ENCODE measurements at regions of chr9 and their contacts with region 1.

Region 1: DNA sequence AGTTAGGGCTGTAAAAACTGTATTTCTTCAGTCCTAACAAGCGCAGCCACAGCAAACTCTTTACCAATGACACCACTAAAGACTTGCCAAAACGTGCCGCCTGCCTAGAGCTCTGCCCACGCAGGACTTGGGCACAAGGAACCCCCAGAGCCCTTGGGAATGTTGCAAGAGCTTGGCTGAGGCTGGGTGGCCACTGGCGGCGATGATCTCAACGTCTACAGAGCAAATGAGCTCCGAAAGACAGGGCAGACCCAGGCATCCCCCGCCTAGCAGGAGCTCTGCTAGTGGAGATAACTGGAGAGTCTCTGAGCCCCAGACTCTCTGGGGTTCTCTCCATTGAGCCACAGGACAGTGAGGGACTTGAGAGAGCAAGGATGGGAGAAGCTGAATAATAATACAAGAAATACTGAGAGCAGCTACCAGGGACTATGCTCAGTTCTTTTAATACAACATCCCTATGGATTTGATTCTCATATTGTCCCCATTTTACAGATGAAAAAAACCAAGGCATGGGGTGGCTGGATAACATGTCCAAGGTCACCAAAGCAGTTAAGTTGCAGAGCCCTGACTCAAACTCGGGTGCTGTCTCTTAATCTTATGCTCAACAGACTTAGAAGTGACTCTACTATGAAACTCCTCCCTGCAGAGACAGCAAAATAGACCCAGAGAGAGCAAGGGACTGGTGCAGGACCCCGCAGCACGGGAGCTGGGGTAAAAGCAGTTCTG is 32.5 kb downstream of the SHB start:
- DNase-seq: peak; percentile 76
- H3K4me3 ChIP-seq: no peak overlapping the region
- H3K27ac ChIP-seq: peak overlapping the region; percentile 49
- H3K4me1 ChIP-seq: peaks cover 55% of the 10 kb centered on the region
- H3K27me3 ChIP-seq: no peaks in the 10 kb centered on the region
- CTCF ChIP-seq: no peak

Region 2: DNA sequence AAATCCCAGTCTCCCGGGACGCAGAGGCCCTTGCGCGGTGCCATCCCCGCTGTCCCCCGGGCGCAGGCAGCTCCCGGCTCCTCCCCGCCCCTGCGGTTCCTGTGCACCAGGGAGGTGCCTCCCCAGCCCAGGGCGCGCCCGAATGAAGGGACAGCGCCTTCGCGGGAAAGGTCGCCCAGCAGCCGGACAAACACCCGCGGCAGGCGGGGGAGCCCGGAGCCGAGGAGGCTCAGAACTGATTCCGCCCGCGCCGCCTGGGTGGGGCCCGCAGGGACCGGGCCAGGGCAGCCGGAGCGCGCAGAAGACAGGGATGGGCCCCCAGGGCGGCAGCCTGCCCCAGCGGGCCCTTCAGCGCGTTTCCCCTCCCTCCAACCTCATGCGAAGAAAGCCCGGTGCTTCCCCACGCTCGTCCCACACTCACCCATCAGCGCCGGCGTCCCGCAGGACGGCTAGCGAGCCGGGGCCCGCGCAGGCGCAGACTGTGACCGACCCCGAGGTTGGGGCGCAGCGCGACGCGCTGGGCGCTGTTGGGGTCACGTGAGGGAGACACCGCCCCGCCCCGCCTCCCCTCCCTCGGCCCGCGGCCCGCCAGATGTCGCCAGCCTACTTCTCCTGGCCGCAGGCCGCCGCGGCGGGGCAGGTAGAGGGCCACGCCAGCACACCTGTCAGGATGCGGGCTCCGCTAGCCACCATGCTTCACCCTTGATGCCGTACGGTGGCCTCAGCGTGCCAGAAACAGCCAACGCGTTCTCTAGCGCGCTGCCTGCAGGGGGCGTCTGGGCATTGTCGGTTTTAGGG is 132.7 kb before region 1 on chr9 and contains the start of gene SLC25A51:
- CTCF ChIA-PET with region 1: no interaction called
- POLR2A ChIA-PET with region 1: no interaction called
- intact Hi-C with region 1: no loop called
- DNase-seq: peak; percentile 94
- H3K4me3 ChIP-seq: peak within 1 kb of the TSS; percentile 70
- H3K27ac ChIP-seq: peak within 1 kb of the TSS; percentile 63
- H3K4me1 ChIP-seq: peaks cover 6% of the 10 kb centered on the region
- H3K27me3 ChIP-seq: no peaks in the 10 kb centered on the region
- CTCF ChIP-seq: peak; percentile 98
- total RNA-seq, gene SLC25A51: 36.3 and 40.8 TPM in 2 replicates

Region 3: DNA sequence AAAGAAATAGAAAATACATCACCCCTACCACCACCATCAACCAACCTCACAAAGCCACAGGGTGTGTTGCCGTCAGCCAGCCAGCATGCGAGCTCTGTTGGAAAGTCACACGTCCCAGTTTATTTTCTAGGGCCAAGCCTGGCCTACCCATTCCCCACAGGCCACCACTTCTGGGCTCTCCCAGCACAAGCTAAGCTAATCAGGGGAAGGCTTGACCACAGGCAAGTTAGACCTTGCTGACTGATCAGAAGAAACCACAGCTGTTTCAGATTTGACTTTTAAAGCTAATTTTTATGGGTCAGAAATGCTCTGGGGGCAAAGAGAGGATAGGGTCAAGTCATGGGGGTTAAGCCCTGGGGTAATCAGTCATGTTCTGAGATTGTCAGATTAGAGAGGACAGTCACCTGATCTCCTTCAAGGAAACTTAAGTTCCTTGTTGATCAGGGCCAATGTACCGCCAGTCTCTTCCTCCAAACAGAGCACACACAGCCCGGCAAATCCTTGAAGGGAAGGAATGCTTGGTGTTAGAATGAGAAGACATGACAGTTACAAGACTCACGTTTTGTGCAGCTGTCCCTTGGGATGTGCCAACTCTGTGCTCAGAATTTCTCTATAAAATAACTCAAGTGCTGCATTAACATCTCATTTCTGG is 24.9 kb after region 1 on chr9:
- CTCF ChIA-PET with region 1: no interaction called
- POLR2A ChIA-PET with region 1: interaction called, 11 read pairs
- intact Hi-C with region 1: no loop called
- DNase-seq: no peak
- H3K4me3 ChIP-seq: no peak overlapping the region
- H3K27ac ChIP-seq: peak overlapping the region; percentile 30
- H3K4me1 ChIP-seq: peaks cover 52% of the 10 kb centered on the region
- H3K27me3 ChIP-seq: no peaks in the 10 kb centered on the region
- CTCF ChIP-seq: no peak

Measured in A673 (cell line).